ENCODE measurements at regions of chr17 and their contacts with region 1.

Region 1: DNA sequence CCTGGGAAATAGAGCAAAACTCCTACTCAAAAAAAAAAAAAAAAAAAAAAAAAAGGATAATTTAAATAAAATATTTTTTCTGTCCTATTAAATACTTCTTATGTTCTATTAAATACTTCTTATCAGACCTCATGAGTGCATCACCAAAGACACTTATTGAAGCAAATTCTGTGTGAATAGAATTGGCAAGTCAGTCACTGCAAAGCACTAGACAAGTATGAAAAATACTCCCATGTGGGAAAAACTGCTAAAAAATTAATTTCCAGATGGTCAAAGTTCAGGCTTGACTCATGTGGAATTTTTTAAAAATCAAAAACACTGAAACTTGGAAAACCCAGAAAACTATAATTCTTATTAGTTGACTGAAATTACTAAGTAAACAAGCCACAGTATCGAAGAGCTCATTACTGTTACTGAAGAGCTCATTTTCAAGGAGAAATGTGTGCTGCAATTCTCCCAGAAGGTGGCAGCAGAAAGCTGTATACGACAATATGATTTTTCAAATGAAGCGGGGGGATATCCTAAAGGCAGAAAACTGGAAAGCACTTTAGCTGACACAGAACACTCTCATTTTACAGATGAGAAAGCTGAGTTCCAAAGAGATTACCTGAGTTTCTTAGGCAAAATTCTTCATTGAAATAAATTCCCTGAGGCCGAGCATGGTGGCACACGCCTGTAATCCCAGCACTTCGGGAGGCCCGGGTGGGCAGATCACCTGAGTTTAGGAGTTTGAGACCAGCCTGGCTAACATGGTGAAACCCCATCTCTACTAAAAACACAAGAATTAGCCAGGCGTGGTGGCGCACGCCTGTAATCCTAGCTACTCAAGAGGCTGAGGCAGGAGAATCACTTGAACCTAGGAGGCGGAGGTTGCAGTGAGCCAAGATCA is 15.9 kb upstream of the FBXO47 start:
- H3K4me3 ChIP-seq: no peak overlapping the region
- H3K27ac ChIP-seq: no peak overlapping the region
- H3K4me1 ChIP-seq: peaks cover 6% of the 10 kb centered on the region
- CTCF ChIP-seq: peak; percentile 63; the same call in 1 of the 2 replicates

Region 2: GRCh38 chr17:38881600-38882191 is 101.4 kb before region 1 on chr17:
- CTCF ChIA-PET with region 1: no interaction called
- POLR2A ChIA-PET with region 1: no interaction called
- H3K4me3 ChIP-seq: no peak overlapping the region
- H3K27ac ChIP-seq: peak overlapping the region; percentile 51; the same call in 1 of the 2 replicates
- H3K4me1 ChIP-seq: peaks cover 30% of the 10 kb centered on the region
- CTCF ChIP-seq: no peak

Region 3: DNA sequence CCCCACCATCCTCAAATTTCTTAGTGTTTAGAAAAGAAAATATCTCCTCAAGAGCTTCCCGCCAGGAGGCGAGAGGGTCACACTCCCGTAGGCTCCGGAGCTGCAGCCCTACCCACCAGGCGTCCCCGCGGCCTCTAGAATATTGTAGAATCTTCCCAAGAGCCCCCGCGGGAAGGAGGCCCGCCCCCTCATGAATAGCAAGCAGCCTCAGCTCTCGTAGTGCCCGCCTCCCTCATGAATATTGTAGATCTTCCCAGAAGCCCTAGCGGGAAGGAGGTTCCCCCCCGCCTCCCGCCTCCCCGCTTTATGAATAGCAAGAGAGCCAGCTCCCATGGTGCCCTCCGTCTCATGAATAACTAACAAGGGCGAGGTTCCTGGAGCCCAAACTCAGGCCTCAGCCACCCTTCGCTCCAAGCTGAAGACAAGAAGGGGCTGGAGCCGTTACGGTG is 15.8 kb before region 1 on chr17 and contains the start of gene FBXO47:
- CTCF ChIA-PET with region 1: interaction called, 12 read pairs
- POLR2A ChIA-PET with region 1: no interaction called
- H3K4me3 ChIP-seq: no peak within 1 kb of the TSS
- H3K27ac ChIP-seq: no peak within 1 kb of the TSS
- H3K4me1 ChIP-seq: no peaks in the 10 kb centered on the region
- CTCF ChIP-seq: no peak

Region 4: DNA sequence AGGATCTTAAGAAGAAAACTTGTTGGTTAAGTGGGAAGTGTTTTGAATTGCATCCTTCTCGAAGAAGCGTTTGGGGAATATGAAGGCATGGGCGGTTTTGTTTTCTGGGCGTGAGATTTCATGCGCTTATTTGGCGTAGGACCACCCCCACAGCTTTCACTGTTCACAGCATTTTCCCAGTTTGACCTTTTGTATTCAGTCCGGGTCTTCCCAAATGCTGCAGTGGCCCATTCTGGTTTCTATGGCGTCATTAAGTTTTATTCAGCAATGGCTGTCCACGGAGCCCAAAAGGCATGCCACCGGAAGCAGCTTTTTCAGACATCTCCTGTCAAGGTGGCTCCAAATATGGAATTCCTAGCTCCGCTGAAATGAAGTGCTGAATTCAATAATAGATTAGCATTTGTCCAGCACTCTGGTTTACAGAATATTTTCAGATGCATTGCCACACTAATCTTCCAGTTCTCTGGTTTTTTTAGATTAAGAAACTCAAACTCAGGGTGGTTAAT is 74.7 kb after region 1 on chr17:
- CTCF ChIA-PET with region 1: interaction called, 20 read pairs
- POLR2A ChIA-PET with region 1: interaction called, 6 read pairs
- H3K4me3 ChIP-seq: peak overlapping the region; percentile 81
- H3K27ac ChIP-seq: no peak overlapping the region
- H3K4me1 ChIP-seq: peaks cover 3% of the 10 kb centered on the region
- CTCF ChIP-seq: no peak

Region 5: DNA sequence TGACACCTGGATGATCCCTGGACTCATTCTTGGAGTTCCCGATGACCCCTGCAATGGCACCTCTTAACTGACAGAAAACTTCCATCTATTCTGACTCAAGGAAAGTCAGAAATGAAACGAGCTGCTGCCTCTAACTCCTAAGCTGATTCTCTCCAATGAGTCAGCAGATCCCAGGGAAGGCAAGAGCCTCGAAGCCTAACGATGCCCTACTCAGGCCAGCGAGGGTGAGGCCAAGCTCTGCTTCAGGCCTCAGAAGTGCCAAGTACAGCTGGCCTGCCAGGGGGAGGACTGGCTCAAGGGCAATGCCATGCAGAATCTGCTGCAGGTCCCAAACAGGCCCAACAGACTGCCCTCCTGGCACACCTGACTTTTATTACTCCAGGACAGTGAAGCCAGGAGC is 132.0 kb after region 1 on chr17:
- CTCF ChIA-PET with region 1: interaction called, 10 read pairs
- POLR2A ChIA-PET with region 1: no interaction called
- H3K4me3 ChIP-seq: no peak overlapping the region
- H3K27ac ChIP-seq: no peak overlapping the region
- H3K4me1 ChIP-seq: no peaks in the 10 kb centered on the region
- CTCF ChIP-seq: no peak

Region 6: DNA sequence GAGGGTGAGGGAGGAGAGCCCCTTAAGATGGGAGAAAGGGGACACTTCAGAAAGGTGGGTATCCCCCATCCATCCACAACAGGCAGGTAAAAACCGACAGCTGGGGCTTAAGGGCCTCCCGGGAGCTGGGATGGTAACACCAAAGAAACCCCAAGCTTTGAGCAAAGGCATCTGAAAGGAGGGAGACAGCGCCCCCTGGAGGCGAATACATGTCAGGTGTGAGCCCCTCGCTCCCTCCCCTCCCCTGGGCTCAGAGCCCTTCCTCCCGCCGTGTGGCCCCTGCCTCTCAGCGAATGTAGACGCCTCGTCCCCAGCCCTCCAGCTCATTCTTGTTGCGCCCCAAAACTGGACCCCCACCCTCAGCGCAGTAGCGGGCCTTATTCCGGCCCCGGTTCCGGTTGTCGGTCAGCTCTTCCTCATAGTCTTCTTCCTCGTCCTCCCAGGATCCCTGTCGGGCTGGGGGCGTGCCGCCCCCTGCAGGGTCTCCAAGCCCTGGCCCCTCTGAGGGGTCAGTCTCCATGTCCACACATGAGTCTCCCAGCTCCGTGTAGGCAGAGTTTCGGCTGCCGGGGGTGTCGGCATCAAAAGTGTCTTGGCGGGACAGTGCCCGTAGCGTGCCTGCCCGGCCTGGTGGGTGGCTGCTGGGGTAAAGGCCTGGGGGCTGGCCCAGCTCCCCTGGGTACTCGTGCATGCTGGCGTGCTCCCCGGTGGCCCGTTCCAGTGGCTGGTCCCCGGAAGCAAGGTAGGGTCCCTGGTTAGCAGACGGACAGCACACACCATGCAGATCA is 192.0 kb after region 1 on chr17:
- CTCF ChIA-PET with region 1: interaction called, 85 read pairs
- POLR2A ChIA-PET with region 1: no interaction called
- H3K4me3 ChIP-seq: no peak overlapping the region
- H3K27ac ChIP-seq: peak overlapping the region; percentile 11; the same call in 1 of the 2 replicates
- H3K4me1 ChIP-seq: 0 out of 2 replicates have a peak, but pooled peaks cover 7% of the 10 kb centered on the region
- CTCF ChIP-seq: peak; percentile 78